Calu3 (cell line): ENCODE measurements at regions of chr7 and their contacts with region 1.

Region 1: DNA sequence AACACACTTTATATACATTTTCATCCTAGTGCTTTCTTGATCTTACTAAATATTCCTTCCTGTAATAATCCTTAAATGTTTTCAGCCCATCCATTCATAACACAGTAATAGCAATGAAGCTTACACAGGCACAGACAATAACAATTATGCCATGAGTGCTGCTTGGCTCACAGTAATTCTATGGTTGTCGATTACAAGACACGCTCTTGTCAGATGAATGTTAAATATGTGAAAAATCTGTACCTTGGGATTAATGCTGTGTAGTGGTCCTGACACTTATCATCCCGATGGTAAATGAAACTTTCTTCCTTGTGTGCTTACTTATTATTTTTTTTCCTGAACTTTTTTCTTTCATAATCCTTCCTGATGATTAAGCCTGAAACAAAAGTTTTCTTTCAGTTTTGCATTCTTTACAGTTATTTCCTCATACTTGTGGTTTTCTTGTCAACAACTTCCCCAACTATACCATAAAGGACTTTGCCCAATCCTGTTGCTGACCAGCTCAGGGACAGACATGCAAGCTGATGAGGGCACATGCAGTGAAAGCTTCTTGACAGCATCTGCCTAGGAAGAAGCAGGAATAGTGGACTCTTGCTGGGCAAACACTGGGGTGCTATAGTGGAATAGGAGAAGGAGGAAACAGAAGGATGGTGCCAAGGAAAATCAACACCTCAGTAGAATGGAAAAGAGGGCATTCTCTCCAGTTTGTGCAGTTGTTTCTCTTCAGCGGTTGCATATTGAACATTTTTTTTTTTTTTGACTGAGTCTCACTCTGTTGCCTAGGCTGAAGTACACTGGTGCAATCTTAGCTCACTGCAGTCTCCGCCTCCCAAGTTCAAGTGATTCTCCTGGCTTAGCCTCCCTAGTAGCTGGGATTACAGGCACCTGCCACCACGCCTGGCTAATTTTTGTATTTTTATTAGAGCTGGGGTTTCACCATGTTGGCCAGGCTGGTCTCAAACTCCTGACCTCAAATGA is 6.7 kb upstream of the MGAM2 start:
- DNase-seq: peak; percentile 50
- H3K4me3 Mint-ChIP-seq: peak overlapping the region; percentile 57
- H3K27ac Mint-ChIP-seq: peak overlapping the region; percentile 86
- H3K4me1 Mint-ChIP-seq: peaks cover 69% of the 10 kb centered on the region
- H3K27me3 Mint-ChIP-seq: no peaks in the 10 kb centered on the region
- CTCF ChIP-seq: no peak

Region 2: GRCh38 chr7:142030294-142030693 is 74.5 kb before region 1 on chr7:
- CTCF ChIA-PET with region 1: no interaction called
- intact Hi-C with region 1: loop called (anchors 5 kb)
- DNase-seq: no peak
- H3K4me3 Mint-ChIP-seq: no peak overlapping the region
- H3K27ac Mint-ChIP-seq: no peak overlapping the region
- H3K4me1 Mint-ChIP-seq: no peaks in the 10 kb centered on the region
- H3K27me3 Mint-ChIP-seq: no peaks in the 10 kb centered on the region
- CTCF ChIP-seq: no peak

Region 3: DNA sequence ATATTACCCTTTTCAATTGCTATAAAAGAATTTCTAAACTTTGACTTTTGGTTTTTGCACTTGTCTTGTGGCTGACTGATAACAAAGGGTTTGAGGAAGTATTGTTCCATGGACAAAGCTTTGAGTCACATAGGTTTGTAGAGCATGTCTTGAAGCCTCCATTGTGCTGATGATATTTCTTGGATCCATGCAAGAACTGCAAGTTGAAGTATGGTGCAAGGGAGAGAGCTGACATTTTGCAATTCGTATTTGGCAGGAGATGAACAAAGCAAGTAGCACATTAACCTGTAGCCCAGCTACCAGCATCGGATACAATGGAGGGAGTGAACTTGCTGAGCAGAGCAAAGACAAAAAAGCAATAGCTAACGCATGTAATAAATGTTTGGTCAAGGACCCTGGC is 30.1 kb after region 1 on chr7:
- CTCF ChIA-PET with region 1: interaction called, 3 read pairs
- intact Hi-C with region 1: loop called (anchors 2 kb)
- DNase-seq: peak; percentile 41
- H3K4me3 Mint-ChIP-seq: peak overlapping the region; percentile 26
- H3K27ac Mint-ChIP-seq: peak overlapping the region; percentile 21
- H3K4me1 Mint-ChIP-seq: peaks cover 49% of the 10 kb centered on the region
- H3K27me3 Mint-ChIP-seq: no peaks in the 10 kb centered on the region
- CTCF ChIP-seq: no peak